Transverse colon (tissue), 4 donors: ENCODE measurements at regions of chr14 and their contacts with region 1.

Region 1: DNA sequence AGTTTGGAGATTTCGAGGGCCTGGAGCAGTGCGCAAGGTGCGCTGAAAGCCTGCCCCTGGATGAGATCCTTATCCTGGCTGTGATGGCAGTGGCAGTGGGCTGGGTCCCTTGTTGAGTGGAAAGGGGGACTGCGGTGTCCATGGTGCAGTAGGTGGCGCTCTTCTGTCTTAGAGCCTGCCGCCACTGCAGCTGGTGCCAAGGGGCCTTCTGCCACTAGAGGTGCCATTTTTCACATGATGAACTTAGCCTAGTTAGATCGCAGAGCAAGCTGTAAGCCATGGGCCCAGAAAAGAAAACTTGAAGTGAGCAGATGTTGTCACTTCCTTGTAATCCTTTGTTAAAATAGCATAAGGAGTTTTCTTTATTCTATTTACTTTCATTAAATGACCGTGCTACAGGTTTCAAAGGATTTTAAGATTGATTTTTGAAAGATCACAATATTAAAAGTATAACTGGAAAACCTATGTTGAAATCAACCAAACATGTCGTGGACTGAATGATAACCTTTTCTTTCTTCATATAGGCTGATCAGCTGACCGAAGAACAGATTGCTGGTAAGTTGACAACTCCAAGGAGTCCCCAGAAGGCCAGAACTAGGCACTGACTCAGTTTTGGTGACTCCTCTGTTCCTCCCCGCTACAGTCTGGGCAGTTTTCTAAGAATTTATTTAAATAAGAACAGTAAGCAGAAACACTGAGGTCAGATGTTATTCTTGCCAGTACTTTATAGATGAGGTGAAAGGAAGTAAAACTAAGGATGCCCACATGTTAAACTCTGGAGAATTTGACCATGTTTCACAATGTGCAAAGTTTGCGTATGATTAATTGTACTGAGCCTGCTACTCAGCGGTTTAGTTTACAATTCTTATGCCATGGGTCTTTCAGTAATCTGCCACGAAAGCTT is 3.0 kb downstream of the CALM1 start:
- DNase-seq: peak; percentile 92
- H3K4me3 ChIP-seq: peak overlapping the region in 3 of 4 donors; percentile 59 to 97 (median 95)
- H3K27ac ChIP-seq: peak overlapping the region; percentile 91 to 99 (median 96)
- H3K4me1 ChIP-seq: peaks cover 6 to 56% (median 39%) of the 10 kb centered on the region in 4 donors
- H3K27me3 ChIP-seq: no peaks in the 10 kb centered on the region
- CTCF ChIP-seq: peak; percentile 98 to 100 (median 99)
- EP300 ChIP-seq: no peak
- POLR2A ChIP-seq: no peak

Region 2: GRCh38 chr14:90274808-90275457 is 124.9 kb before region 1 on chr14:
- in situ Hi-C with region 1: no loop called
- intact Hi-C with region 1: no loop called
- DNase-seq: no peak
- H3K4me3 ChIP-seq: no peak overlapping the region
- H3K27ac ChIP-seq: peak overlapping the region in 1 of 4 donors; percentile 5
- H3K4me1 ChIP-seq: no peaks in the 10 kb centered on the region
- H3K27me3 ChIP-seq: no peaks in the 10 kb centered on the region
- CTCF ChIP-seq: no peak
- EP300 ChIP-seq: no peak
- POLR2A ChIP-seq: no peak

Region 3: GRCh38 chr14:90383075-90383730 is 16.6 kb before region 1 on chr14:
- in situ Hi-C with region 1: no loop called
- intact Hi-C with region 1: loop called (anchors 2 kb)
- DNase-seq: peak; percentile 100
- H3K4me3 ChIP-seq: peak overlapping the region; percentile 49 to 67 (median 60)
- H3K27ac ChIP-seq: peak overlapping the region; percentile 99 to 100 (median 100)
- H3K4me1 ChIP-seq: peaks cover 18 to 53% (median 35%) of the 10 kb centered on the region in 4 donors
- H3K27me3 ChIP-seq: no peaks in the 10 kb centered on the region
- CTCF ChIP-seq: peak in 2 of 5 experiments; percentile 24 to 42
- EP300 ChIP-seq: no peak
- POLR2A ChIP-seq: peak; percentile 99

Region 4: GRCh38 chr14:90574188-90575131 is 174.7 kb after region 1 on chr14:
- in situ Hi-C with region 1: no loop called
- intact Hi-C with region 1: no loop called
- DNase-seq: no peak
- H3K4me3 ChIP-seq: no peak overlapping the region
- H3K27ac ChIP-seq: peak overlapping the region in 1 of 4 donors; percentile 17
- H3K4me1 ChIP-seq: peaks cover 0 to 6% (median 0%) of the 10 kb centered on the region in 4 donors
- H3K27me3 ChIP-seq: no peaks in the 10 kb centered on the region
- CTCF ChIP-seq: no peak
- EP300 ChIP-seq: no peak
- POLR2A ChIP-seq: no peak

Region 5: DNA sequence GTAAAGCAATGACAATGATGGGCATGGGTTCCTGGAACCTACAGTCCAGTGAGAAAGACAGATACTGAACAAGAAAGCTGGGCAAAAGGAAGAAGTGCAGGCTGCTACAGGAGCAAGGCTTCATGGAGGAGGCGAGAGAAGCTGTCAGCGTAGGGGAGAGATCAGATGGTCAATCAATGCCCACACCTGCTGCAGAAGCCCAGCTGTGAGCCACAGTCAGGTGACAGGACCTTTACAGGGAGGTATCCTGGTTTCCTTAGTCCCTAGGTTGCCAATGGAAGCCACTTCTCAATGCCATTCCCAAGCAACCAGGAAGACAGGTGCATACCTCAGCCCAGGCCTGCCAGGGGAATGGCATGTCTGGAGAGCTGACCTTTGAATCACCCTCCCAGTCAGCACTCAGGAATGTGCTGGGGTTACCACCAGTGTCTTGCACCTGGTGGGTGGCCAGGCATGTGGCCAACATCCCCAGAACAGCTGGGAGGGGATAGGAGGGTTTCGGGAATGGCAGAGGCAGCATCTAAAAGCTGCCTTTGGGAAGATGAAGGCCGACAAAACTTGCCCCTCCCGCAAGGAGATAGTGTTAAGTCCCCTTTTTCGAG is 246.2 kb after region 1 on chr14:
- in situ Hi-C with region 1: no loop called
- intact Hi-C with region 1: loop called (anchors 10 kb)
- DNase-seq: no peak
- H3K4me3 ChIP-seq: no peak overlapping the region
- H3K27ac ChIP-seq: peak overlapping the region in 1 of 4 donors; percentile 77
- H3K4me1 ChIP-seq: peaks cover 0 to 19% (median 9%) of the 10 kb centered on the region in 4 donors
- H3K27me3 ChIP-seq: no peaks in the 10 kb centered on the region
- CTCF ChIP-seq: no peak
- EP300 ChIP-seq: no peak
- POLR2A ChIP-seq: no peak

Region 6: GRCh38 chr14:90697577-90698206 is 297.9 kb after region 1 on chr14:
- in situ Hi-C with region 1: loop called in 3 of 4 experiments (anchors 10 to 25 kb)
- intact Hi-C with region 1: loop called (anchors 2 kb)
- DNase-seq: peak; percentile 83
- H3K4me3 ChIP-seq: no peak overlapping the region
- H3K27ac ChIP-seq: peak overlapping the region; percentile 68 to 83 (median 72)
- H3K4me1 ChIP-seq: peaks cover 0 to 24% (median 11%) of the 10 kb centered on the region in 4 donors
- H3K27me3 ChIP-seq: no peaks in the 10 kb centered on the region
- CTCF ChIP-seq: peak; percentile 94 to 97 (median 94)
- EP300 ChIP-seq: no peak
- POLR2A ChIP-seq: no peak

Region 7: GRCh38 chr14:90758028-90758889 is 358.5 kb after region 1 on chr14:
- in situ Hi-C with region 1: no loop called
- intact Hi-C with region 1: loop called (anchors 10 kb)
- DNase-seq: peak; percentile 94
- H3K4me3 ChIP-seq: peak overlapping the region; percentile 3 to 52 (median 38)
- H3K27ac ChIP-seq: peak overlapping the region; percentile 85 to 89 (median 88)
- H3K4me1 ChIP-seq: peaks cover 9 to 20% (median 13%) of the 10 kb centered on the region in 4 donors
- H3K27me3 ChIP-seq: no peaks in the 10 kb centered on the region
- CTCF ChIP-seq: peak; percentile 77 to 94 (median 82)
- EP300 ChIP-seq: no peak
- POLR2A ChIP-seq: peak; percentile 45